Prostate gland (tissue), 2 donors: ENCODE measurements at regions of chr4 and their contacts with region 1.

Region 1: DNA sequence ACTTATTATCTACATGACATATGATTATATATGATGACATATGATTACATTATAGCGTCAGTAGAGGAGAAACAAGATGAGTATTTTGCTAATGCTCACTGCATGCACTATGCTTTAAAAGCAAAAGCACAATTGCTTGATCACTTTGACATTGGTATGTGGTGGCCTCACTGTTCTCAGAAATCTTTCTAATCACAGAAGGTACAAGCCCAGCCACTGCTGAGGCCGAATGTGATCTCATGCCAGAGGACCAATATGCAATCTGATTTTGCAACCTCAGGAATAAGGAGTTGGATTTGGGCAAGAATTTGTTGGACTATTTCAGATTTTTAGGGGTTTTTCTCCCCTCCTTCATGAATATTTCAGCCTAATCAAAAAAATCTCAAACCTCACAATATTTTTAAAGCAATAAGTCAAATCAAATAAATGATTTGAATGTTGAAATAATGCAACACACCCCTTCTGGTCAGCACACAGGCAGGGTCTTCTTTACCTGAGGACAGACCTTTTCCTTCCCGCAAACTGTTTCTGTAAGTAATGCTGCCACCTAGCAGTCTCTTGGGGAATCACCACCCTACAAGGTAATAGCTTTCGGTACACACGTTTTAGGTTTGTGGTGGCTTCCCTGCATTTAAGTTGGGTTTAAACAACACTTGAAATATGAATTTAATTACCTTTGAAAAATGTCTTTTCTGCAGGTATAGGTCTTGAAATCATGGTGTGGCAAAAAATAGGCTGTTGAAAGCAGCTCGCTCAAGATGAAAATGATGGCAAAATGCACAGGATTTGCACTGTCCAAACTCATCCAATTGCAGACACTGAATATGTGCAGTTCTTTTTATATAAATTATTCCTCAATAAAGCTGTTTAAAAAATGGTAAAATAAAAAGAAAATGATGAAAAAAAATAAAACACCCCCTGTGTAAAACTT is 4.8 kb upstream of the CXCL13 start:
- DNase-seq: peak; percentile 52
- H3K4me3 ChIP-seq: no peak overlapping the region
- H3K27ac ChIP-seq: peak overlapping the region; percentile 20 to 59
- H3K4me1 ChIP-seq: no peaks in the 10 kb centered on the region
- H3K27me3 ChIP-seq: no peaks in the 10 kb centered on the region
- CTCF ChIP-seq: peak; percentile 65 to 77 (median 72)
- POLR2A ChIP-seq: no peak

Region 2: DNA sequence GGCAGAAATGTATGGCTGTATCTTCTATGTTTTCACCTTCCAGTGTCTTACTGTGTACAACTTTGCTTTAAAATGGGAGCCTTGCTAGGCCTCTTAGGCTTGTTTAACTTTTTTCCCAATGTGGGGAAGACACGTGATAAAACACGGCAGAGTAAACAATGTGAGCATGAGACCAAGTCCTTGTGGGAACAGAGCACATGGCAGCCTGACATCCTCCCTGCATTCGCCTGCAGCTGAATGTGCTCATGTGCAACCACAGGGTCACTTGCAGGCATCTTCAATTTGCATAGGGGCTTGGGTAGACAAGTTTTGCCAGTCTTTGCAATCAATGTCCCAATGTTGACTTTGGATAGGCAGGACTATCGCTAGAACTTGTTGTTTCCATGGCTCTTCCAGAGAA is 352.0 kb before region 1 on chr4:
- intact Hi-C with region 1: no loop called
- DNase-seq: no peak
- H3K4me3 ChIP-seq: no peak overlapping the region
- H3K27ac ChIP-seq: no peak overlapping the region
- H3K4me1 ChIP-seq: no peaks in the 10 kb centered on the region
- H3K27me3 ChIP-seq: no peaks in the 10 kb centered on the region
- CTCF ChIP-seq: no peak
- POLR2A ChIP-seq: no peak

Region 3: GRCh38 chr4:77433418-77433733 is 167.4 kb before region 1 on chr4:
- intact Hi-C with region 1: loop called (anchors 5 kb)
- DNase-seq: peak; percentile 28
- H3K4me3 ChIP-seq: no peak overlapping the region
- H3K27ac ChIP-seq: no peak overlapping the region
- H3K4me1 ChIP-seq: no peaks in the 10 kb centered on the region
- H3K27me3 ChIP-seq: no peaks in the 10 kb centered on the region
- CTCF ChIP-seq: peak in 3 of 4 experiments; percentile 47 to 70 (median 68)
- POLR2A ChIP-seq: no peak